BJ (cell line): ENCODE measurements at regions of chr22 and their contacts with region 1.

Region 1: DNA sequence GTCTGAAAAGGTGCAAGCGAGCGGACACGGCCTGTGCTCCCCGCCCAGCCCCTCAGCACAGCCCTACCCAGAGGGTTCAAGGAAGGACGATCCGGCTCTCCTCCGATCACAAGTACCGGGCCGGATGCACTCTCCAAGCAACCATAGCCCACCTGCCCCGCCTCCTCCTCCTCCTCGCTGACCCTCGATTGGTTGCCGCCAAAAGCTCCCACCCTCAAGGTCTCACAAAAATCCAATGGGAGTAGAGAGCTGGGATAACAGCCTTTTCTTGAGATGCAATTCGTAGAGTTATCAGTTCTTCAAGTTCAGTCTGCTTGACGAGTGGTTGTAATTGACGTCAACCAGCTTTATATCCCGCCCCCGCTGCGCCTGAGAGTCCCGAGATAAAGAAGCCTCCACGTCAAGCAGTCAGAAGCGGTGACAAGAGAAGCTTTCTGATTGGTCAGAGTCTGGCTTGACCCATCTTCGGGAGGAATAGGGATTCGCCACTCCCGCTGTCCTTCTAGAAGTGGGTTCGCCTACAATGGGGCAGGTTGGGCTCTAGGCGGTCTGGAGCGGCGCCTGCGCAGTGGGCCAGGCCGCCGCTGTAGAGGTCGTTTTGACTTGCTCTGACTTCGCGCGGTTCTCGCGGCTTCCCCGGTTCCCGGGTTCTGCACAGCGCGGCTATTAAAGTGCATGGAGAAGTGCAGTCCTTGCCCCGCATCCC is at the start of gene IFT27:
- DNase-seq: peak; percentile 100
- H3K4me3 ChIP-seq: peak within 1 kb of the TSS; percentile 81
- H3K27me3 ChIP-seq: no peaks in the 10 kb centered on the region
- CTCF ChIP-seq: no peak
- polyA plus RNA-seq, gene IFT27: 20.6 and 23.0 TPM in 2 replicates

Region 2: GRCh38 chr22:36510966-36511881 is 264.9 kb before region 1 on chr22:
- CTCF ChIA-PET with region 1: interaction called, 20 read pairs
- POLR2A ChIA-PET with region 1: no interaction called
- DNase-seq: no peak
- H3K4me3 ChIP-seq: no peak overlapping the region
- H3K27me3 ChIP-seq: no peaks in the 10 kb centered on the region
- CTCF ChIP-seq: peak; percentile 72

Region 3: DNA sequence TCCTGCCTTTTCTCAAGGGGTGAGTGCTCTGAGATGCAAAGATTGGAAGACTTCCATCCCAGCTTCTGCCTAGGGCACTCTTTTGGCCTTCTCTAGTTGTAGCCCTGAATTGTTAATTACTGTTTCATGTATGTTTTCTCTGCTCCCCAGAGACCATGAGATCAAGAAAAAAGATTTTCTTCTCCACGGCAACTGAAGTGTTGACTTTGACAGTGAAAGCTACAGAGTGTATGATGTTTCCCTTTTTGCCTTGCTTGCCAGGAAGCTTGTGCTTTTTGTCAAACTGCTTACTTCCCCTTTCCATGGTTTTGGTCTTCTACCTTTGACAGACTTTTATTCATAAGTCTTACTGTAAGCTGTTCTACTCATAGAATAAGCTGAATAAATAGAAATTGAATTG is 223.8 kb before region 1 on chr22:
- CTCF ChIA-PET with region 1: interaction called, 16 read pairs
- POLR2A ChIA-PET with region 1: no interaction called
- DNase-seq: no peak
- H3K4me3 ChIP-seq: no peak overlapping the region
- H3K27me3 ChIP-seq: peaks cover 13% of the 10 kb centered on the region
- CTCF ChIP-seq: no peak

Region 4: DNA sequence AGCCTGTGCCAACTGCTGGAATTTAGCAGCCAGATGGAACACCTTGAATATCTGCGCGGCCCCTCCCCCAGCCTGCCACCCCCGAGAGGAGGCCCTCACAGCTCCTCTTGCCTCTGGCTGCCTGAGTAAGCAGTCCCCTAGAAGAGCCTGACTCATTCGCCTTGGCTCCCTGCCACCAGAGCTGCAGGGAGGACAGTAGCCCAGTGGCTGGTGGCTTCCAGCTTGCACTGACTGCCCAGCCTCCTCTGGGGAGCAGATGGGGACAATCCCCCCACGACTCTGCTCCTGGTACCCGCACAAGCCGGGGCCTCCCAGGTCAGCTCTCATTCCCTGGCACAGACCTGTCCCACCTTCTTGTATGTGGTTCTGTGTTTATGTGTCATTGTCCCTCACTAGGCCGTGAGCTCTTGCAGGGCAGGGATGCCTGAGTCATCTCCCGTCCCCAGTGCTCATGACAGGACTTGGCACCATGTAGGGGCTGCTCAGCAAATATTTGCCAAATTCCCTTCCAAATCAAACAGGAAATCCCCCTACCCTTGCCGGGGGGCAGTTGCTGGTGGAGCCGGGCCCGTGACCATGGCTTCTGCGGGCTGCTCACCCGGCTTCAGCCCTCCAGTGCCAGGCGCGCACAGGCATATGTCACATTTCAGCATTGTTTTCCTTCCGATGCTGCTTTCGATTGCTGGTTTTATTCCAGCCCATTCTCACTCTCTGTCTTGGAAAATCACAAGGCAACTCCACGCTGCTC is 116.2 kb before region 1 on chr22:
- CTCF ChIA-PET with region 1: no interaction called
- POLR2A ChIA-PET with region 1: no interaction called
- DNase-seq: peak; percentile 46
- H3K4me3 ChIP-seq: no peak overlapping the region
- H3K27me3 ChIP-seq: peaks cover 7% of the 10 kb centered on the region
- CTCF ChIP-seq: no peak

Region 5: GRCh38 chr22:36757668-36758211 is 18.4 kb before region 1 on chr22:
- CTCF ChIA-PET with region 1: interaction called, 37 read pairs
- POLR2A ChIA-PET with region 1: interaction called, 3 read pairs
- DNase-seq: no peak
- H3K4me3 ChIP-seq: no peak overlapping the region
- H3K27me3 ChIP-seq: peaks cover 4% of the 10 kb centered on the region
- CTCF ChIP-seq: peak; percentile 89